ENCODE measurements at regions of chr9 and their contacts with region 1.

Region 1: DNA sequence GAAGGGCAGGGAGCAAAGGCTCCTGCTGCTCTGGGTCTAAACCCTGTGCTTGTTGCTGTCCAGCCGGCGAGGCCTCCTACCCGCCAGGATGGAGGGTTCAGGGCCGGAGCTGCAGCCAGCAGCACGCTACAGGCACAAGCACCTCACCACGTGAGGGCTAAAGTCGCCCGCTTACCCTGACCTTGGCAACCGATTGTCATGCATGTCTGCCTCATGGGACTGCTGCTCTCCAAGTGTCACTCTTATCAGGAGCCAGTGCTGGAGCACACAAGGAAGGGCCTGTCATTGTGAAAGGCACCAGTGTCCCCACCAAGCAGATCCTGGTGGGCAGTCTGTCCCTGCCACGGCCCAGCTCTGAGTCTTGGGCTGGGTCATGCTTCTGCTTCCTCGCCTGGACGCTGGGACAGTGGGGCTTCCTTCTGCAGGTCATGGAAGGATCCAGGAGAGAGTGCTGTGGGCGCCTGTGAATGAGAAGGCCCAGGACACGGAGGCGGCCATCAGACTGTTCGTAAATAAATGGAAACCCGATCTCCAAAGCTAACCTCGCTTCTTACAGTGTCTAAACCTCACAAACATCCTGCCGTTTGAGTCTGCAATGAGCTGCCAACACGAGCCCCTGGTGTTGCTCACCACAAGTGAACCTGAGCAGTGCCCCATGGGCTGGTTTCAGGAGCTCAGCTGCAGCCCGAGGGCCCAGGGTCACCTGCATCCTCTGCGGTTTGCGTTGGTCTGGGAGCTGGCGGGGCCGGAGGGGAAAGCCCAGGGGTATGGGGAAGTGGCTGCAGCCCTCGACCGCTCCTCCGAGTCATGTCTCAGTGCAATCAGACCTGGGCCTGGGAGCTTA is 58.2 kb upstream of the RXRA start:
- DNase-seq: peak; percentile 40 to 41
- ATAC-seq: peak; percentile 63 to 89 (median 78)
- H3K4me3 ChIP-seq: no peak overlapping the region
- H3K27ac ChIP-seq: peak overlapping the region in 9 of 10 donors; percentile 22 to 79 (median 58)
- H3K4me1 ChIP-seq: peaks cover 0 to 18% (median 13%) of the 10 kb centered on the region in 9 donors
- H3K27me3 ChIP-seq: peaks cover 0 to 34% (median 6%) of the 10 kb centered on the region in 7 donors
- CTCF ChIP-seq: no peak

Region 2: DNA sequence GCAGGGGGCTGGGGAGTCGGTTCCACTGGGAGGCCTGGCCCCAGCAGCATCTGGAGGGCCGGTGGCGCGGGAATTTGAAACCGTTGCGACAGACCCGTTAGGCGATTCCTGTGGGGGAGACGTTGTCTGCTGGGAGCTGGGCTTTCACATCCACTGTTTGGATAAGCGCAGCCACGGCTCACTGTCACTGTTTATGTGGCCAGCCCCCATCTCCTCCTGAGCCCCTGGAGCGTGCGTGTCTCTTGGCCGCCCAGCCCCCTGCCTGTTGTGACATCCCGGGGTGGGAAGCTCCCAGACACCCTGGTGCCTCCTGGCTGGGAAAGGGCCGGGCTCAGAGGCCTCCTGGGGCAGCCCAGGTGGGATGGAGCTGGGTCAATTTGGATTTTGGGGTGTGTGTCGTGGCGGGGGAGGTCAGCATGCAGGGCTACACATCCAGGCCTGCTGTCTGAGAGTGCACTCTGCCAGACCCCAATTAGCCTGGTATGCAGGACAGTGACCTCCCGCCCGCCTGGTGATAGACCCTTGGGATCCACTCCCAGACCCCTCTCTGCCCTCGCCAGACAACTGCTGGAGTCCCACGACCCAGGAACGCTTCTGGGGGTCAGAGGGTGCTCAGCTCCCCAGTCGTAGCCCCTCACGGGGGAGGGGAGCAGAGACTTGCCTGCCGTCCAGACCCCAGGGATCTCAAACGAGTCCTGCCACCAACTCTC is 41.7 kb before region 1 on chr9:
- intact Hi-C with region 1: loop called in 1 of 10 experiments (anchors 5 kb)
- DNase-seq: peak in 1 of 2 donors; percentile 52
- ATAC-seq: no peak
- H3K4me3 ChIP-seq: no peak overlapping the region
- H3K27ac ChIP-seq: no peak overlapping the region
- H3K4me1 ChIP-seq: peaks cover 3 to 16% (median 7%) of the 10 kb centered on the region in 9 donors
- H3K27me3 ChIP-seq: peaks cover 0 to 11% (median 0%) of the 10 kb centered on the region in 7 donors
- CTCF ChIP-seq: no peak

Region 3: GRCh38 chr9:134339183-134339806 is 71.2 kb after region 1 on chr9:
- intact Hi-C with region 1: no loop called
- DNase-seq: no peak
- ATAC-seq: peak in 2 of 8 donors; percentile 1 to 8
- H3K4me3 ChIP-seq: peak overlapping the region in 7 of 10 donors; percentile 5 to 29 (median 15)
- H3K27ac ChIP-seq: peak overlapping the region in 8 of 10 donors; percentile 29 to 71 (median 60)
- H3K4me1 ChIP-seq: peaks cover 81 to 100% (median 100%) of the 10 kb centered on the region in 9 donors
- H3K27me3 ChIP-seq: no peaks in the 10 kb centered on the region
- CTCF ChIP-seq: no peak